Mammary epithelial cell (primary cell): ENCODE measurements at regions of chr2 and their contacts with region 1.

Region 1: GRCh38 chr2:195318440-195319111 is 338.4 kb upstream of the SLC39A10 start:
- DNase-seq: peak; percentile 44
- H3K4me3 ChIP-seq: peak overlapping the region in 1 of 3 experiments; percentile 13
- H3K27ac ChIP-seq: peak overlapping the region; percentile 88
- H3K4me1 ChIP-seq: peaks cover 46% of the 10 kb centered on the region
- H3K27me3 ChIP-seq: no peaks in the 10 kb centered on the region
- CTCF ChIP-seq: peak; percentile 45 to 56

Region 2: DNA sequence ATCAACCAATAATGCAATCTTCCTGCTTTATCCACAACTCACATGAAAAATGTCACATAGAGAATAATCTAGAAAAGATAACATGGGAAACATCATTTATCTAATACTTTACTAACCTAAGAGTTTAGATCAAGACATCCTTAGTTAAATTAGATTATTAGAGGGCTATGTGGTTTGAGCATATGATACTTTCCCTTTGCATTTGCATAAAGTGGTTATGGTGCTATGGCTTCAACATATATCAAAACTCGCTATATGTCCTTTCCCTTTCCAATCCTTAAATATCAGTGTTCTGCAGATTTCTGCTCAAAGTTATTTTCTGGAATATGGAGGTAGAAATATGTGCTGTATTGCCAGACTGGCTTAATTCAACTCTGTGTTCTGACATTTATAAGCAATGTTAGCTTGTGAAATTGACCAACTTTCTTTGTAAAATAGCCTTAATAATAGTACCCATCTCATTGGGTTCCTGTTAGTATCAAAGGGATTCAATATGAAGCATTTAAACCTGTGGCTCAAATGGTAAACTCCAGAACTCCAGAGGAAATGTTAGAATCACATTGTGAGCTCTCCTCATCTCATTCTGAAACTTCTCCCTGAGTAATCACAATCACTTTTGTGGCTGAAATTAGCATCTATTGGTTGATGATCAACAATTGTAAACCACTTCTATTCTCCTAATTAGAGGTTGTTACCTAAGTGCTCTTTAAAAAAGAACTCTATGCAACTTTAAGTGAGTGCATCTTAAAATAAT is 751.5 kb before region 1 on chr2:
- CTCF ChIA-PET with region 1: no interaction called
- dilution Hi-C with region 1: no loop called
- in situ Hi-C with region 1: loop called in 1 of 2 experiments (anchors 25 kb)
- intact Hi-C with region 1: no loop called
- DNase-seq: no peak
- H3K4me3 ChIP-seq: no peak overlapping the region
- H3K27ac ChIP-seq: no peak overlapping the region
- H3K4me1 ChIP-seq: no peaks in the 10 kb centered on the region
- H3K27me3 ChIP-seq: no peaks in the 10 kb centered on the region
- CTCF ChIP-seq: no peak

Region 3: DNA sequence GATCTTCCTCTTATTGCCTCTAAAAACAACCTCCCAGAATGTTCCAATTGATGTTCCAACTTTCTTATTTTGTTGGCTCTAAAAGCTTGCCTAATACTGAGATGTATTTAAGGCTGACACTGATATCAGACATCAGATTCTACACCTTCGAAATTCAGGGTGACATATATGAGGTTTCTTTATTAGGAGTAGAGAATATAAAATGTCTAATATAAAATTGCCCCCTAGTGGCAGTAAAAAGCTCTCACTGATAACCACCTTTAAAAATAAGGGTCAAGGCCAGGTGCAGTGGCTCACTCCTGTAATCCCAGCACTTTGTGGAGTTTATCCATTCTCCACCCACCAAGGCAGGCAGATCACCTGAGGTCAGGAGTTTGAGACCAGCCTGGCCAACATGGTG is 451.2 kb before region 1 on chr2:
- CTCF ChIA-PET with region 1: no interaction called
- dilution Hi-C with region 1: no loop called
- in situ Hi-C with region 1: no loop called
- intact Hi-C with region 1: loop called (anchors 10 kb)
- DNase-seq: peak; percentile 8
- H3K4me3 ChIP-seq: no peak overlapping the region
- H3K27ac ChIP-seq: no peak overlapping the region
- H3K4me1 ChIP-seq: no peaks in the 10 kb centered on the region
- H3K27me3 ChIP-seq: no peaks in the 10 kb centered on the region
- CTCF ChIP-seq: peak; percentile 44 to 62

Region 4: GRCh38 chr2:195561203-195562032 is 242.8 kb after region 1 on chr2:
- CTCF ChIA-PET with region 1: no interaction called
- dilution Hi-C with region 1: no loop called
- in situ Hi-C with region 1: no loop called
- intact Hi-C with region 1: loop called (anchors 5 kb)
- DNase-seq: peak; percentile 92
- H3K4me3 ChIP-seq: no peak overlapping the region
- H3K27ac ChIP-seq: peak overlapping the region; percentile 65
- H3K4me1 ChIP-seq: peaks cover 34% of the 10 kb centered on the region
- H3K27me3 ChIP-seq: no peaks in the 10 kb centered on the region
- CTCF ChIP-seq: no peak

Region 5: DNA sequence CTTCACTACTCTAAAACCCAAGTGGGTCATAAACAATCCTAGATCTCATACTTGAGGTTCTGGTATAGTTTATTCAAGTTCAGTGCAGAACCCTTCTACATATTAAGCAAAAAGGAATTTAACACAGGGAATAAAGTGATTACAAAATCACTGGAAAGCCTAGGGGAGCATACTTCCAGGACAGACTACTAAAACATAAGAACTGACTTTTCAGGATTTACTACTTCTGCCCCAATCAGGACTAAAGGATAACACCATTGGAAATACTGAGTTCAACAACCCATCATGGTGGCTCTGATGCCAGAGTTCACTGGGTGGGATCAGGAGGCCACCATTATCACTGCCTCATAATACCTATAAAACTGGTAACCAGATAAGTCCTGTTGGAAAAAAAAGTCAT is 626.5 kb after region 1 on chr2:
- CTCF ChIA-PET with region 1: no interaction called
- dilution Hi-C with region 1: no loop called
- in situ Hi-C with region 1: loop called in 1 of 2 experiments (anchors 25 kb)
- intact Hi-C with region 1: no loop called
- DNase-seq: no peak
- H3K4me3 ChIP-seq: no peak overlapping the region
- H3K27ac ChIP-seq: no peak overlapping the region
- H3K4me1 ChIP-seq: no peaks in the 10 kb centered on the region
- H3K27me3 ChIP-seq: peaks cover 2% of the 10 kb centered on the region
- CTCF ChIP-seq: no peak